Right cardiac atrium (tissue), 5 donors: ENCODE measurements at regions of chr1 and their contacts with region 1.

Region 1: DNA sequence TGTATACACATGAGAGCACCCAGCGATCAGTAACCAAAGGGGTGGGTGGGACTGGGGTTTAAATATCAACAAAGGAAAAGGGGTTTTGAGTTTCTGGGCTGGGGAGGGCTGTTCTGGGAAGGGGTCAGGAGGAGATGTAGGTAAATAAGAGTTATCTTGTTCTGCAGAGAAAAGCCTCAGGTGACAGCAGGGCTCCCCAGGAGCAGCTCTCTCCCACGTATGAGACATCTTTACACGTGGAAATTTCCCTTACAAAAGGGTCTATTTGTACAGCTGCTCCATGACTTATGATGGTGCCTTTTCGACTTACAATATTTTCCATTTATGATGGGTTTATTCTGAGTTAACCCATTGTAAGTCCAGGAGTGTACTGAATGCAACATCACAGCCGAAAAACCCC is 16.3 kb upstream of the PADI2 start:
- DNase-seq: no peak
- ATAC-seq: no peak
- H3K4me3 ChIP-seq: no peak overlapping the region
- H3K27ac ChIP-seq: no peak overlapping the region
- H3K4me1 ChIP-seq: no peaks in the 10 kb centered on the region
- H3K27me3 ChIP-seq: no peaks in the 10 kb centered on the region

Region 2: GRCh38 chr1:17405898-17406759 is 270.6 kb after region 1 on chr1:
- intact Hi-C with region 1: loop called in 1 of 4 experiments (anchors 10 kb)
- DNase-seq: peak; percentile 54 to 84 (median 73)
- ATAC-seq: peak; percentile 79 to 83
- H3K4me3 ChIP-seq: no peak overlapping the region
- H3K27ac ChIP-seq: no peak overlapping the region
- H3K4me1 ChIP-seq: no peaks in the 10 kb centered on the region
- H3K27me3 ChIP-seq: no peaks in the 10 kb centered on the region